ENCODE measurements at regions of chr16 and their contacts with region 1.

Region 1: DNA sequence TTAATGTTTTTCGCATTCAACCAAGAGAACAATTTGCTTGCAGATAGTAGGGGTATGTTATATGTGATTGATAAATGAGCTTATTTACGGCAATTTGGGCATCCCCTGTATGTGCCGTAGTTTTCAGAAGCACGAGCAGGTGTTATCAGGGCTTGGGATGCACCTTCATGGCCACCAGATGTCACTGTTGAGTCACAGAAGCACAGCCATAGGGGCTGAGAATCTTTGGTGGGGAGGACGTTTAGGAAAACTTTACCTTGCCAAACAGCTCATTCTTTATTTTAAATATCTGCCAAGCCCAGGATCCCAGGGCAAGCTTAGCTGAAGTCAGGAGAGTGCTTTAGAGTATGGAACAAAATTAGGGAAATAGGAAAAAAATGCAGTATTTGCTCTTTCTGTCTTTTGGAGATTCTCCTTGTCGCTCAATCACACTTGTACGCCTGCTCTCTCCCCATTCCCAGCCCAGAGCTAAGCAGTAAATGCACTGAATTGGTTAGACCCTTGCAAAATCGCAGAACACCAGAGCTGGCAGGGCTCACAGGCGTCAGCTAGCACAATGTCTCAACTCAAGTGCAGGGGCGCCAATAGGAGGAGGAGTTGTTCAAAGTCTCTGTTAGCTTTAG is 93.6 kb upstream of the MPHOSPH6 start:
- DNase-seq: peak; percentile 2
- H3K4me3 ChIP-seq: no peak overlapping the region
- H3K27ac ChIP-seq: no peak overlapping the region
- H3K27me3 ChIP-seq: peaks cover 8% of the 10 kb centered on the region
- CTCF ChIP-seq: peak; percentile 96

Region 2: GRCh38 chr16:82031116-82032084 is 232.2 kb before region 1 on chr16:
- CTCF ChIA-PET with region 1: interaction called, 18 read pairs
- POLR2A ChIA-PET with region 1: no interaction called
- DNase-seq: peak; percentile 27
- H3K4me3 ChIP-seq: no peak overlapping the region
- H3K27ac ChIP-seq: no peak overlapping the region
- H3K27me3 ChIP-seq: no peaks in the 10 kb centered on the region
- CTCF ChIP-seq: peak; percentile 62

Region 3: DNA sequence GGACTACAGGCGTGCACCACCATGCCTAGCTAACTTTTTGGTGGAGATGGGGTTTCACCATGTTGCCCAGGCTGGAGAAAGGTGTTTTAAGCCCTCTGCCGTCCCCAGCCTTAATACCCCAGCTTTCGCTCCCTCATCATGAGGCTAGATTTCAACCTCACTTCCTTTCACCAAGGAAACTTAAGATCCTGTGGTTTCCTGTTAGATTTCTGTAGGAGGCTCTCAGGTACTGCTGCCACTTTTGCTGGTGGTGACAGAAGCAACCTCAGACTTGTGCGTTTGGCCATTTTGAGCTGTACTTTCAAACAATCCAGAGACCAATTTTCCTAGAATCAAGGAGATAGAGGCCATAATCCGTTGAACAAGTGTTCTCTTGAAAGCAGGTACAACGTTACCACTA is 129.8 kb before region 1 on chr16:
- CTCF ChIA-PET with region 1: no interaction called
- POLR2A ChIA-PET with region 1: no interaction called
- DNase-seq: no peak
- H3K4me3 ChIP-seq: no peak overlapping the region
- H3K27ac ChIP-seq: no peak overlapping the region
- H3K27me3 ChIP-seq: no peaks in the 10 kb centered on the region
- CTCF ChIP-seq: no peak

Region 4: DNA sequence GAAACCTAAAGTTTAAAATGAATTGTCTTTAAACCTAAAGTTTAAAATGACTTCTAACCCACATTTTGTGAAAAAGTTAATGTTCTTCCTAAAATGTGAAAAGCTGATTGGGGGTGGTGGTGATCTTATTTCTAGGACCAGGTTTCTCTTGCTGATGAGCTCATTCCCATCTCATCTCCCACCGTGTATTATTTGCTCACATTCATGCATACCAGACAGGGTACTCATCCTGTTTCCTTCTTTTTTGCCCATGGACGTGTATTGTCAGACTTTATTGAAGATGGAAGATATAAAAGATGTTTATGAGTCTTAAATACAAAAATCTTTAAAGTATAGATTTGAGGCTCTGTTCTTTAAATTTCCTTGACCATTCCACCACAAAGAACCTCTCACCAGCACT is 23.5 kb before region 1 on chr16:
- CTCF ChIA-PET with region 1: interaction called, 36 read pairs
- POLR2A ChIA-PET with region 1: no interaction called
- DNase-seq: no peak
- H3K4me3 ChIP-seq: no peak overlapping the region
- H3K27ac ChIP-seq: no peak overlapping the region
- H3K27me3 ChIP-seq: peaks cover 3% of the 10 kb centered on the region
- CTCF ChIP-seq: no peak

Region 5: GRCh38 chr16:82280867-82281266 is 17.2 kb after region 1 on chr16:
- CTCF ChIA-PET with region 1: interaction called, 13 read pairs
- POLR2A ChIA-PET with region 1: no interaction called
- DNase-seq: no peak
- H3K4me3 ChIP-seq: no peak overlapping the region
- H3K27ac ChIP-seq: no peak overlapping the region
- H3K27me3 ChIP-seq: no peaks in the 10 kb centered on the region
- CTCF ChIP-seq: no peak

Region 6: DNA sequence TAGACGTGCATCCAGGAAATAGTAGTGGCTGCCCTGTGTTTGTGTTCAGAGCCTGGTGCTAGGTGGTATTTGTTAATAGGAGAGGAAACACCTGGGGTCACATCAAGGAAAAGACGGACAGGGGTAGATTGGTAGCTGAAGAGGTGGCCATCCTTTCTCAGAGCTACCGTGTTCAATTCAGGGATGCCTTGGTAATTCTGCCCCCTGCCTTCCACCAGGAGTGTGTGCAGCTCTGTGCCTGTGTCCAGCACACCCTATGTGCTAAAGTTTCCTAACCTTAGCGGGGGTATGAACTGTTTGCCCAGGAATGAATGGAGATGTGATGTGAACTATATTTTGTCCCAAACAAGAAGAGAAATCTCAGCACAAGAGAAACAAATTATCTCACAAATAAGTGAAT is 80.5 kb after region 1 on chr16:
- CTCF ChIA-PET with region 1: interaction called, 18 read pairs
- POLR2A ChIA-PET with region 1: no interaction called
- DNase-seq: no peak
- H3K4me3 ChIP-seq: no peak overlapping the region
- H3K27ac ChIP-seq: no peak overlapping the region
- H3K27me3 ChIP-seq: no peaks in the 10 kb centered on the region
- CTCF ChIP-seq: peak; percentile 22; the same call in 1 of the 2 replicates

Region 7: DNA sequence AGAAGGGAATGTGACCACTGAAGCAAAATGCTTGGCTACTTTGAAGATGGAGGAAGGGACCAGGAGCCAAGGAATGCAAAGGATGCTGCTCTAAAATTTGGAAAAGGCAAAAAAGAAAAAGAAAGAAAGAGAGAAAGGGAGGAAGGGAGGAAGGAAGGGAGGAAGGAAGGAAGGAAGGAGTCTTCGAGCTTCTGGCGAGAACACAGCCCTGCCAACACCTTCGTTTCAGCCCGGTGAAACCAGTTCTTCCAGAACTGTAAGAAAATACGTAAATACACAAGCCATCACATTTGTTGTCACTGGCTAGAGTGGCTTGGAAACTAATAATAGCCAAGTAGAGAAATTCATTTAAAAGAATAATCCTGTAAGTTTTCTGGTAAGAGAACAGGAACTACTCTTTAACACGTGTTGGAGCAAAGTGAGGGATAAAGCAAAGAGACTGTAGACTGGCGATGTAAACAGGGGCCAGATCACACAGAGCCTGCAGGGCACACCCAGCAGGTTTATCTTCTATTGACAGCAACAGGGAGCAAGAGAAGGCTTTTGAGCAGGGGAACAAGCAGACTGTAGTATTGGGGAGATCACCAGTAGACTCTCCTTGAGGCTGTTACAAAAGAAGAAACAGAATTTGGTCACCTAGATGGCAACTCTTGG is 95.1 kb after region 1 on chr16:
- CTCF ChIA-PET with region 1: no interaction called
- POLR2A ChIA-PET with region 1: no interaction called
- DNase-seq: no peak
- H3K4me3 ChIP-seq: no peak overlapping the region
- H3K27ac ChIP-seq: no peak overlapping the region
- H3K27me3 ChIP-seq: no peaks in the 10 kb centered on the region
- CTCF ChIP-seq: no peak

Region 8: DNA sequence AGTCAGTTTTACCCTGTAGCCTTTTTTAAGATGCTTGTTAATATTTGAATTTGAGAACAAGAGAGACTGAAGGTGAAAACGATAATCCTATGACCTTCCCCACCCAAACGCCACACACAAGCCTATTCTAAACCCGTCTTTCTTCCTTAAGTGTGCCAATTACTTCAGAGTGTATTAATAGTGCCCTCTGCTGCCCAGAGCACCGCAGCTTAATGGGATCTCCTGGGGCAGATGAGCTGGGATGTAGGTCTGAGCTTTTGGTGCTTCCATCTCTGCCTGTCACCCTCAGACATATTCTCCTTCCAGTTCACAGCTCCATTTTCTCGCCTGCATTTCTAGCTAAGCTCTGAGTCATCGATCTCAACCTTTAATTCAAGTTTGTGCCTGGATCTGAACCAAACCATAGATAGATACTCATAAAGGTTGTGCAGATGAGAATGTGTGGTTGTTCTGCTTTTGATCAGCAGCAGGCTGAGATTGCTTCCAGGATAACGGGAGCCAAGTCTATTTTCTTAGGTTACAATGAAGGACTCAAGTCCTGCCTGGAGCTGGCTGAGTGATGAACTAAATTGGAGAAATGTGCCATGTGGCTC is 316.8 kb after region 1 on chr16:
- CTCF ChIA-PET with region 1: interaction called, 15 read pairs
- POLR2A ChIA-PET with region 1: no interaction called
- DNase-seq: no peak
- H3K4me3 ChIP-seq: no peak overlapping the region
- H3K27ac ChIP-seq: no peak overlapping the region
- H3K27me3 ChIP-seq: peaks cover 7% of the 10 kb centered on the region
- CTCF ChIP-seq: peak; percentile 13; the same call in 1 of the 2 replicates

Region 9: DNA sequence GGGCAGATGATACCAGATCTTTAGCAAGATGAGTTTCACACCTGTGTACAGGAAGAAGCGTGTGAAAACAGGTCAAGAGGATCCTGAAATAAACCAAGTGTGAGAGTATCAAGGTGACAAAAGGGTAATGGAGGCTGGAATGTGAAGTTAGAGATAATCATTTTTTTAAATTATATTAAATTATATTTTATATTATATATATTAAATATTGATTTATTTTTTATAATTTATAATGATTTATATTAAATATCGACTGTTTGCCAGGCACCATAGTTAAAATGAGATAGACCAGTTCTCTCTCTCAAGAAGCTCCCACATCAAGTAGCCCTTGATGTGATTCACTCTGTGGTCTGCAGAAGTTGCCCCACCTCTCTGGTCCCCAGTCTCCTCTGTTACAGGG is 1183.9 kb after region 1 on chr16:
- CTCF ChIA-PET with region 1: interaction called, 41 read pairs
- POLR2A ChIA-PET with region 1: no interaction called
- DNase-seq: no peak
- H3K4me3 ChIP-seq: no peak overlapping the region
- H3K27ac ChIP-seq: no peak overlapping the region
- H3K27me3 ChIP-seq: no peaks in the 10 kb centered on the region
- CTCF ChIP-seq: no peak

Measured in AG04450 (cell line).